ENCODE measurements at regions of chr22 and their contacts with region 1.

Region 1: GRCh38 chr22:40975366-40975765 is 24.2 kb downstream of the RBX1 start:
- DNase-seq: no peak
- H3K4me3 ChIP-seq: no peak overlapping the region
- H3K27ac ChIP-seq: no peak overlapping the region
- H3K27me3 ChIP-seq: no peaks in the 10 kb centered on the region
- CTCF ChIP-seq: no peak

Region 2: DNA sequence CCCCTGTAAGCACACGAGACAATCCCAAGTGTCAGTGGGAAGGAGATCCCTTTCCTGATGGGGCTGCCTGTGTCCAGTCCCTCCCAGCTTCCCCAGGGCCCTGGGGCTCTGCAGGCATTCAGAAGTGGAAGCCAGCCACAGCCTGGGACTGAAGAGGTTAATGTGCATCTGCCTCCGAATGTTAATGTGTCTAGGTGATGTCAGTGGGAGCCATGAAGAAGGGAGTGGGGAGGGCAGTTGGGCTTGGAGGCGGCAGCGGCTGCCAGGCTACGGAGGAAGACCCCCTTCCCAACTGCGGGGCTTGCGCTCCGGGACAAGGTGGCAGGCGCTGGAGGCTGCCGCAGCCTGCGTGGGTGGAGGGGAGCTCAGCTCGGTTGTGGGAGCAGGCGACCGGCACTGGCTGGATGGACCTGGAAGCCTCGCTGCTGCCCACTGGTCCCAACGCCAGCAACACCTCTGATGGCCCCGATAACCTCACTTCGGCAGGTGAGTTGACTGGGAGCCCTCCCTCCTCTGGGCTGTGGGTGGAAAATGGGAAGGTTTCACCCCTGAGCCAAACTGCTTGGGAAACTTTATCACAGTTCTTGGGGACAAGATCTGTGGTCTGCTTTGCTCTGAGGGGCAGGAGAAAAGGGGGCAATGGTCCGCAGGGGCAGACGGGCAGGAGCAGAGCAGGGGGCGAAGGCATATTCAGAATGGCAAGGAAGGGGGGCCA is 296.0 kb before region 1 on chr22 and contains the start of gene MCHR1:
- CTCF ChIA-PET with region 1: no interaction called
- POLR2A ChIA-PET with region 1: no interaction called
- DNase-seq: no peak
- H3K4me3 ChIP-seq: peak within 1 kb of the TSS; percentile 55
- H3K27ac ChIP-seq: peak within 1 kb of the TSS; percentile 39
- H3K27me3 ChIP-seq: no peaks in the 10 kb centered on the region
- CTCF ChIP-seq: no peak
- polyA plus RNA-seq, gene MCHR1: 2.3 and 3.1 TPM in 2 replicates

Region 3: DNA sequence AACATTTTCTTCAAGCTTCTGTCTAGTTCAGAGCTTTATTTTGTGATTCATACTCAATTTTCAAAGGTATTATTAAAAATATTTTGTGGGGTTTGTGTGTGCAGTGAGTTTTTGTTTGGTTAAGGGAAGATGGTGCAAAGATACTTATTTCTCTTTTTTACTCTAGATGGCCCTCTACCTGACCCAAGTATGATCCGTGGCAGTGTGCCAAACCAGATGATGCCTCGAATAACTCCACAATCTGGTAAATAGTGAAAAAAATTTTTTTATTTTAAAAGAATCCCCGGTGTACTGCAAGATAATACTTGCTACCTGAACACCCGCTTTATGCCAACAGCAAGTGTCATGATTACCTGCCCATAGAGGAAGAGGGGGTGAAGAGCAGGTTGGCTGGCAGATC is 171.2 kb after region 1 on chr22:
- CTCF ChIA-PET with region 1: interaction called, 14 read pairs
- POLR2A ChIA-PET with region 1: no interaction called
- DNase-seq: no peak
- H3K4me3 ChIP-seq: no peak overlapping the region
- H3K27ac ChIP-seq: no peak overlapping the region
- H3K27me3 ChIP-seq: no peaks in the 10 kb centered on the region
- CTCF ChIP-seq: no peak